AG04450 (cell line): ENCODE measurements at regions of chr12 and their contacts with region 1.

Region 1: GRCh38 chr12:121773011-121773777 is 20.3 kb downstream of the RHOF start:
- DNase-seq: no peak
- H3K4me3 ChIP-seq: no peak overlapping the region
- H3K27ac ChIP-seq: no peak overlapping the region
- H3K27me3 ChIP-seq: no peaks in the 10 kb centered on the region
- CTCF ChIP-seq: peak; percentile 89

Region 2: GRCh38 chr12:121697098-121697698 is 76.0 kb before region 1 on chr12:
- CTCF ChIA-PET with region 1: interaction called, 36 read pairs
- POLR2A ChIA-PET with region 1: interaction called, 3 read pairs
- DNase-seq: no peak
- H3K4me3 ChIP-seq: no peak overlapping the region
- H3K27ac ChIP-seq: no peak overlapping the region
- H3K27me3 ChIP-seq: peaks cover 2% of the 10 kb centered on the region
- CTCF ChIP-seq: peak; percentile 47

Region 3: GRCh38 chr12:121712461-121713256 is 60.5 kb before region 1 on chr12 and contains the start of gene TMEM120B:
- CTCF ChIA-PET with region 1: interaction called, 11 read pairs
- POLR2A ChIA-PET with region 1: interaction called, 6 read pairs
- DNase-seq: no peak
- H3K4me3 ChIP-seq: peak within 1 kb of the TSS; percentile 93
- H3K27ac ChIP-seq: peak within 1 kb of the TSS; percentile 68
- H3K27me3 ChIP-seq: no peaks in the 10 kb centered on the region
- CTCF ChIP-seq: no peak
- polyA plus RNA-seq, gene TMEM120B: 11.1 and 13.3 TPM in 2 replicates

Region 4: GRCh38 chr12:121762269-121762668 is 10.9 kb before region 1 on chr12:
- CTCF ChIA-PET with region 1: interaction called, 14 read pairs
- POLR2A ChIA-PET with region 1: no interaction called
- DNase-seq: no peak
- H3K4me3 ChIP-seq: no peak overlapping the region
- H3K27ac ChIP-seq: no peak overlapping the region
- H3K27me3 ChIP-seq: no peaks in the 10 kb centered on the region
- CTCF ChIP-seq: no peak

Region 5: DNA sequence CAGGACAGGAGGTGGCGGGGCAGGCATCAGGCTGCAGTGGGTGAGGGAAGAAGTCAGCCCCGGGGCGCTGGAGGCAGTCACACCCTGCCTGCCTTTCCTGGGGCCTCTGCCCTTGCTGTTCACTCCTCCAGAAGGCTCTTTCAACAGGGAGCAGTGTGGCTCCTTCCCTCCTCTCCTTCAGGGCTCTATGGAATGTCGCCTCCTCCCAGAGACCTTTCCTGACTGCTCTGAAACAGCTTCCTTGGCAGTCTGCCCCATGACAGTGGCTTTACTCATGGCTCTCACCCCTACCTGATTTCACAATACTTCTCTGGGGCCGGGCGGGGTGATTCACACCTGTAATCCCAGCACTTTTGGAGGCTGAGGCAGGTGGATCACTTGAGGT is 13.2 kb after region 1 on chr12:
- CTCF ChIA-PET with region 1: interaction called, 14 read pairs
- POLR2A ChIA-PET with region 1: interaction called, 6 read pairs
- DNase-seq: peak; percentile 68
- H3K4me3 ChIP-seq: no peak overlapping the region
- H3K27ac ChIP-seq: peak overlapping the region; percentile 21
- H3K27me3 ChIP-seq: no peaks in the 10 kb centered on the region
- CTCF ChIP-seq: 0 out of 2 replicates have a peak, but pooled peaks have one; percentile 2